ENCODE measurements at regions of chr9 and their contacts with region 1.

Region 1: GRCh38 chr9:93028448-93029006 is 30.0 kb upstream of the SUSD3 start:
- DNase-seq: peak; percentile 54 to 94 (median 68)
- ATAC-seq: peak; percentile 85
- H3K4me3 ChIP-seq: peak overlapping the region; percentile 60
- H3K4me3 Mint-ChIP-seq: peak overlapping the region; percentile 91
- H3K27ac ChIP-seq: peak overlapping the region; percentile 92 to 95
- H3K27ac Mint-ChIP-seq: peak overlapping the region; percentile 99
- H3K4me1 ChIP-seq: peaks cover 99% of the 10 kb centered on the region
- H3K4me1 Mint-ChIP-seq: peaks cover 80% of the 10 kb centered on the region
- H3K27me3 ChIP-seq: no peaks in the 10 kb centered on the region
- H3K27me3 Mint-ChIP-seq: no peaks in the 10 kb centered on the region
- CTCF ChIP-seq: no peak

Region 2: GRCh38 chr9:93013856-93014582 is 14.5 kb before region 1 on chr9:
- CTCF ChIA-PET with region 1: interaction called, 3 read pairs
- POLR2A ChIA-PET with region 1: interaction called, 23 read pairs
- intact Hi-C with region 1: no loop called
- DNase-seq: peak in 1 of 14 experiments; percentile 28
- ATAC-seq: no peak
- H3K4me3 ChIP-seq: no peak overlapping the region
- H3K4me3 Mint-ChIP-seq: no peak overlapping the region
- H3K27ac ChIP-seq: no peak overlapping the region
- H3K27ac Mint-ChIP-seq: peak overlapping the region; percentile 58
- H3K4me1 ChIP-seq: peaks cover 16% of the 10 kb centered on the region
- H3K4me1 Mint-ChIP-seq: peaks cover 14% of the 10 kb centered on the region
- H3K27me3 ChIP-seq: no peaks in the 10 kb centered on the region
- H3K27me3 Mint-ChIP-seq: no peaks in the 10 kb centered on the region
- CTCF ChIP-seq: no peak

Region 3: GRCh38 chr9:93051680-93052089 is 23.2 kb after region 1 on chr9:
- CTCF ChIA-PET with region 1: interaction called, 8 read pairs
- POLR2A ChIA-PET with region 1: interaction called, 15 read pairs
- intact Hi-C with region 1: loop called in 1 of 2 experiments (anchors 2 kb)
- DNase-seq: no peak
- ATAC-seq: no peak
- H3K4me3 ChIP-seq: no peak overlapping the region
- H3K4me3 Mint-ChIP-seq: no peak overlapping the region
- H3K27ac ChIP-seq: no peak overlapping the region
- H3K27ac Mint-ChIP-seq: no peak overlapping the region
- H3K4me1 ChIP-seq: peaks cover 38% of the 10 kb centered on the region
- H3K4me1 Mint-ChIP-seq: peaks cover 32% of the 10 kb centered on the region
- H3K27me3 ChIP-seq: no peaks in the 10 kb centered on the region
- H3K27me3 Mint-ChIP-seq: no peaks in the 10 kb centered on the region
- CTCF ChIP-seq: no peak

Region 4: DNA sequence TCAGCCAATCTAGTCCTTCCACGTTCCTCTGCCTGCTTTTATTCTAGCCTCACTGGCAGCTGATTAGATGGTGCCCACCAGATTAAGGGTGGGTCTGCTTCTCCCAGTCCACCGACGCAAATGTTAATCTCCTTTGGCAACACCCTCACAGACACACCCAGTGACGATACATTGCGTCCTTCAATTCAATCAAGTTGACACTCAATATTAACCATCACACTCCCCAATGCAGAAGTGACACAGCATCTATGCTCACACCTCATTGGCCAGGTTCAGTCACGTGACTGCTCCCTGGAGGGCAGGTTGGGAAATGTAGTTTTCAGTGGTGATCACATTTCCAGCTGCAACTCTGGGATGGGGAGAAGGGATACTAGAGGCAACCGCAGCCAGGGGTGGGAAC is 42.9 kb after region 1 on chr9:
- CTCF ChIA-PET with region 1: interaction called, 3 read pairs
- POLR2A ChIA-PET with region 1: interaction called, 163 read pairs
- intact Hi-C with region 1: no loop called
- DNase-seq: peak in 4 of 14 experiments; percentile 22 to 55 (median 36)
- ATAC-seq: peak; percentile 71
- H3K4me3 ChIP-seq: no peak overlapping the region
- H3K4me3 Mint-ChIP-seq: peak overlapping the region; percentile 42
- H3K27ac ChIP-seq: peak overlapping the region in 1 of 2 donors; percentile 9
- H3K27ac Mint-ChIP-seq: peak overlapping the region; percentile 83
- H3K4me1 ChIP-seq: peaks cover 69% of the 10 kb centered on the region
- H3K4me1 Mint-ChIP-seq: peaks cover 83% of the 10 kb centered on the region
- H3K27me3 ChIP-seq: no peaks in the 10 kb centered on the region
- H3K27me3 Mint-ChIP-seq: no peaks in the 10 kb centered on the region
- CTCF ChIP-seq: no peak